ENCODE measurements at regions of chr6 and their contacts with region 1.

Region 1: DNA sequence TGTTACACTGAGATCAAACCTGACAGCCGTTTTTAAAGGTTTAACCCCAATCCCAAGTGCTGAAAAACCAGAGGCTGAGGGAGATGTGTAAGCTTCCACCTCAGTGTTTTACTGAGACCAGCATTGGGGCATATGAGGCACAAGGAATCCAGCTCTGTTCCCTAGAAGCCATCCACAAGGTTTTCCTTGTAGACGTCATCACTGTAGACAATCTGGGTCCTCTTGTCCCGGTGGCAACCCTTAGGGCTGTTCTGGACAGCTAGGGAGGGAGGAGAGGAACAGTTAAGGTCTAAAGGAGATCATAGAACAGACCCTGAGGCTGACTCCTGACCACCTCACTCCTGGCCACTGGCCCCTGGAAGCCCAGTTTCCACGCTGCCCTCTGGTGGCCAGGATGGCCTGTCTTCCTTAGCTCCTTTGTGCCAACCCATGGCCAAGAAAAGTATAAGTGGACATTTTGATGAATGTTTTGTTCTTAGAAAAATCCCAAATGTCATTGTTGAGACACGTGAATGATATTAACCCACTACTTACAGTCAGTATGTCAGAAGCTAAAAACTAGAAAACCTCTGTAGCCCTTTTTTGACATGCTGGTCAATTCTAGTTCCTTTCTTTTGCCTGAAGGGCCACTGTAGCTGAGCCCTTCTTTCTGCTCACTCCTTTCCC is 6.4 kb downstream of the CFB start:
- DNase-seq: peak in 1 of 2 donors; percentile 45
- H3K4me3 ChIP-seq: no peak overlapping the region
- H3K27ac ChIP-seq: peak overlapping the region in 1 of 2 donors; percentile 51
- H3K4me1 ChIP-seq: peaks cover 0 to 4% (median under 1%) of the 10 kb centered on the region in 4 donors
- H3K27me3 ChIP-seq: no peaks in the 10 kb centered on the region
- CTCF ChIP-seq: peak; percentile 66 to 68

Region 2: DNA sequence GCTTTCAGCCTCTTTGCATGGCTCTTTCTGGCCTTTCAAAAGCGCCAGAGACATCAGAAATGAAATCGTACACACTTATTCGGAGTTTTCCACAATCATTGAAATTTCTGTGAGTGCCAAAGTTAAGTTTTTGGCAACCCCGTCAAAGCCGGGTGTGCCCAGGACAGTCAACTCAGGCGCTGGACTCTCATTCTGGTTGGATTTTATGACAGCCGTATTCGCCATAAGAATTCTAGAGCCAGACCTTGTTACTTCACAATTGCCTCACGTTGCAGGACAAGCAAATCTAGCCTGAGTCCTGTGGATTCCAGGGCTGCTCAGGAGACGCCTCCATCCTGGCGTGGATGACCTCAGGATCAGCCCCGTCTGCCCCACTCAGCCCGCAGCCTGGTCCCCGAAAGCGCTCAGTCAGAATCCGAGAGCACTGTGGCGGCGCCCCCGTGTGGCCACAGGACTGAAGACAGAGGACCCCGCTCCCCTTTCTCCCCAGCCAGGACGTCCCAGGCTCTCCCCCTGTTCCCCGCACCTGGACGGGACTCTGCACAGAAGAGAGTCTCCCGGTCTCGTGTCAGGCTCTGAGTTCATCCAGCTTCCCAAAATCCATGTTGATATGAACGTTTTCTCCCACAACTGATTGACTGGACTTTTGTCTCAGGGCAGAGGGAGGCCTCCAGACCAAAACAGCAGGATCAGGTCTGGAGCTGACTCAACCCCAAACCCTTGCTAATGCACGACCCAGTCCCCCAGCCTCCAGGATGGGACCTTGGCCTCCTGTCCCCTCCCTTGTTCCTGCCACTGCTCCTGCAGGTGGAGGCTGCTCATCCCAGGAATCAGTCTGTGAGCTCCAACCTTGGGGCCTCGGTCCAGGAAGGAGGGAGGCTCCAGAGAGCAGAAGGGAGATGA is 510.7 kb before region 1 on chr6:
- intact Hi-C with region 1: no loop called
- DNase-seq: peak; percentile 86 to 88
- H3K4me3 ChIP-seq: peak overlapping the region in 1 of 2 donors; percentile 41
- H3K27ac ChIP-seq: no peak overlapping the region
- H3K4me1 ChIP-seq: peaks cover 0 to 8% (median 1%) of the 10 kb centered on the region in 4 donors
- H3K27me3 ChIP-seq: no peaks in the 10 kb centered on the region
- CTCF ChIP-seq: peak; percentile 79 to 91

Region 3: DNA sequence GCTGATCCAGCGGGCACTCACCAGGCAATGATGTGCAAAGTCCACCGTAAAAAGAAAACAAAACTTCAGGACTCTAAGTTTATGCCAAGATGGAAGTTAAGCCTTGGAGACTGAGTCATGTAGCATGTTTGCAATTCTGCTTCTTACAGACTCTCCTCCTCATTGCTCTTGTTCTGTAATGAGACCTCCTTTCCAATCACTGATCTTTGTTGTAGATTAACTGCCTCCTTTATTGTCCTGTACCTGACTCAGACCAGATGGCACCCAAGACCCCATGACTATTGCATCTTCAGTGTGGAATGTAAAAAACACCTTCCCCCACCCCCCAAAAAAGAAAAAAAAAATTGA is 100.8 kb before region 1 on chr6:
- intact Hi-C with region 1: no loop called
- DNase-seq: no peak
- H3K4me3 ChIP-seq: no peak overlapping the region
- H3K27ac ChIP-seq: no peak overlapping the region
- H3K4me1 ChIP-seq: no peaks in the 10 kb centered on the region
- H3K27me3 ChIP-seq: no peaks in the 10 kb centered on the region
- CTCF ChIP-seq: no peak

Region 4: DNA sequence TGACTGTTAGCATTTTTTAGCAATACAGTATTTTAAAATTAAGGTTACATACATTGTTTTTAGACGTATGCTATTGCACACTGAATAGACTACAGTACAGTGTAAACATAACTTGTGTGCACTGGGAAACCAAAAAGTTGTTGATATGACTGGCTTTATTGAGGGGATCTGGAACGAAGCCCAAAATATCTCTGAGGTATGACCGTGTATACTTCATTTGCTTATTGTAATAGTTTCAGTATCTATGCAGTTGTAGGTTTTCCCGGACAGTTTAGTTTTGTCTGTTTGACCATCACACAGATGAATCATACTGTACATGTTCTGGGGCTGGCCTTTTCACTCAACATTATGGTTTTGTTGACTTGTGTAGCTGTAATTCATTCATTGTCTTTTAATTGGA is 43.5 kb before region 1 on chr6:
- intact Hi-C with region 1: loop called (anchors 5 kb)
- DNase-seq: no peak
- H3K4me3 ChIP-seq: no peak overlapping the region
- H3K27ac ChIP-seq: no peak overlapping the region
- H3K4me1 ChIP-seq: peaks cover 0 to 13% (median 5%) of the 10 kb centered on the region in 4 donors
- H3K27me3 ChIP-seq: no peaks in the 10 kb centered on the region
- CTCF ChIP-seq: no peak

Measured in tibial artery (tissue), 4 donors.